ENCODE measurements at regions of chr7 and their contacts with region 1.

Region 1: DNA sequence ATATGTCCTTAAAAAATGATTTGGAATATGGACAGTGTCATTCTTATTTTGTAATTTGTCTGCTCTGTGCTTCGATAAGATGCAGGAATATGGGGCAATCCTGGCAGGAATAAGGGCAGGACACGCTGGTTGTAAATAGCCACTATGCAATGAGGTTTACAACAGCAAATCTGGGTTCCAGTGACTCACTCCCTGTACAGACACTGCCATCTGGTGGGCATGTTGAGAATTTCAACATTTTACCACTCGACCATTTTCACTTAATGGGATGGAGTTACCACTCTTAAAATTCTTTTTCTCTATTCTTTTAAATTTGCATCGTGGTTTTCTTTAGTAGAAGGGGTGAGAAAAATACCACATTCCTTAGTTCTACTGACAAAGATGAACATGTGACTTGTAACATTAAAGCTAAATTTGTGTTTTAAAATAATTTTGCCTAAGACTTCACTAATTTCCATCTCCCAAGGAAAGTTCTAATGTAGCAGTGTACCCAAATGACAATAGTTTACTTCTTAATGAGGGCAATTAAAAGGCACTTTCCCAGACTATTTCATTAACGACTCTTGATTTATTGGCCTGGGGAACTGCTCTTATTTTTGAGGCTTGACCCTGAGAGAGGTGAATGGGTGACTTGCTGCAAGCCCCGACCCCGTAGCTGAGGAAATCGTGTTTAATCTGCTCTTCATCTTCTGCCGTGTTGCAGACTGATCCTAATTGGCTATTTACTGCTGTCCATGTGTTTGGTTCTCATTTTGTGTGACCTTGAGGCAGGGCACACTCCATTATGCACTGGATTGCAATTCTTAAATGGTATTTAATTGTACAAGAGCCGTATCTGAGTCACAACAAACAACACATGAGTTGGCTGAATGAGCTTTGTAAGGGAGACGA is 173.6 kb upstream of the IMMP2L start:
- DNase-seq: peak; percentile 46
- H3K4me3 ChIP-seq: no peak overlapping the region
- H3K27ac ChIP-seq: no peak overlapping the region
- H3K4me1 ChIP-seq: no peaks in the 10 kb centered on the region
- H3K27me3 ChIP-seq: no peaks in the 10 kb centered on the region
- CTCF ChIP-seq: peak; percentile 75 to 85 (median 78)
- POLR2A ChIP-seq: no peak

Region 2: DNA sequence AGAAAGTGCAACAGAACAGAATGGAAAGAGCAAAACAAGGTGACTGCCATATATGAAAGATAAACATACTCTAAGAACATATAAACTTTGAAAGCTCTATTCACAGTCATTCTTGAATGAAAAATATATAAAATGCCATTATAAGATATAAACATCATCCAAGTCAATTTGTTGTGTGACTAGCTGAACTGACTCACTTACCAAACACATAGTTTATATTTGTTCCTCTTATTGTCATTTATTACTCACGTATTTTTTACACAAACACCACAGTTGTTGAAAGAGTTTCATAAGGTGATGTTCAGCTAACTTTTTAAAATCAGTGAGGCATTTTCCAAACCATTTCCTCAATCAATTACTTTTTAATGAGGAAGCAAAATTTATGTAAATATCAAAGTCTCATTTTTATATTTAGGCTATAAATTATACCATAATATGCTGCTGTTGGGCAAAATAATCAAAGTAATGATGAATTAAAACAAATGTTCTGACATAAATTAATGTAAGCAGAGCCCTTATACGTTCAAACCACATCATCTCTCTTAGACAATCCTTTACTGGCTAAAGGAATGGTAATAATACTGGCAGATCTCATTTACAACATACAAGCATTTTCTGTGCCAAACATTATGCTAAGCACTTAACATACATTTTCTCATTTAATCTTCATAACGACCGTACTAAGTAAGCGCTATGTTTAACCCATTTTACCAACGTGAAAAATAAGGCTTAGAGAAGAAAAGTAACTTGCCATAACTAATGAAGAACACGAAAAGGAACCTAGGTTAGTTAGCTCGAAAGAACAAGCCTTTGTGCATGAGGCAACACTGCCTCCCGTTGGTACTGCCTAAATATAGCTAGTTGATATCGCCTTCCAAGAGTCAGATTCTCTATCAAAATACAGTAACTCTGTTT is 637.6 kb before region 1 on chr7:
- intact Hi-C with region 1: loop called (anchors 10 kb)
- DNase-seq: no peak
- H3K4me3 ChIP-seq: no peak overlapping the region
- H3K27ac ChIP-seq: no peak overlapping the region
- H3K4me1 ChIP-seq: no peaks in the 10 kb centered on the region
- H3K27me3 ChIP-seq: no peaks in the 10 kb centered on the region
- CTCF ChIP-seq: peak in 2 of 4 experiments; percentile 14 to 35
- POLR2A ChIP-seq: no peak

Region 3: GRCh38 chr7:111561885-111562732 is 173.8 kb before region 1 on chr7 and contains the start of gene IMMP2L:
- intact Hi-C with region 1: loop called (anchors 10 kb)
- DNase-seq: peak; percentile 82
- H3K4me3 ChIP-seq: peak within 1 kb of the TSS; percentile 84 to 91
- H3K27ac ChIP-seq: peak within 1 kb of the TSS; percentile 88 to 89
- H3K4me1 ChIP-seq: no peaks in the 10 kb centered on the region
- H3K27me3 ChIP-seq: no peaks in the 10 kb centered on the region
- CTCF ChIP-seq: peak in 3 of 4 experiments; percentile 18 to 26 (median 22)
- POLR2A ChIP-seq: peak; percentile 71
- total RNA-seq, gene IMMP2L: 16.9 to 20.4 TPM